ENCODE measurements at regions of chr3 and their contacts with region 1.

Region 1: GRCh38 chr3:105827959-105828358 is 40.9 kb downstream of the CBLB start:
- DNase-seq: no peak
- H3K4me3 Mint-ChIP-seq: peak overlapping the region; percentile 57
- H3K27ac Mint-ChIP-seq: peak overlapping the region; percentile 96
- H3K4me1 Mint-ChIP-seq: peaks cover 88% of the 10 kb centered on the region
- H3K27me3 Mint-ChIP-seq: no peaks in the 10 kb centered on the region

Region 2: GRCh38 chr3:105700575-105700974 is 127.4 kb before region 1 on chr3:
- intact Hi-C with region 1: no loop called
- DNase-seq: no peak
- H3K4me3 Mint-ChIP-seq: no peak overlapping the region
- H3K27ac Mint-ChIP-seq: peak overlapping the region; percentile 61
- H3K4me1 Mint-ChIP-seq: peaks cover 38% of the 10 kb centered on the region
- H3K27me3 Mint-ChIP-seq: no peaks in the 10 kb centered on the region

Region 3: GRCh38 chr3:105759442-105760078 is 68.4 kb before region 1 on chr3:
- intact Hi-C with region 1: no loop called
- DNase-seq: no peak
- H3K4me3 Mint-ChIP-seq: no peak overlapping the region
- H3K27ac Mint-ChIP-seq: peak overlapping the region; percentile 72
- H3K4me1 Mint-ChIP-seq: peaks cover 76% of the 10 kb centered on the region
- H3K27me3 Mint-ChIP-seq: no peaks in the 10 kb centered on the region

Region 4: GRCh38 chr3:105774444-105775180 is 53.3 kb before region 1 on chr3:
- intact Hi-C with region 1: loop called (anchors 1 kb)
- DNase-seq: no peak
- H3K4me3 Mint-ChIP-seq: no peak overlapping the region
- H3K27ac Mint-ChIP-seq: peak overlapping the region; percentile 76
- H3K4me1 Mint-ChIP-seq: peaks cover 71% of the 10 kb centered on the region
- H3K27me3 Mint-ChIP-seq: no peaks in the 10 kb centered on the region

Region 5: DNA sequence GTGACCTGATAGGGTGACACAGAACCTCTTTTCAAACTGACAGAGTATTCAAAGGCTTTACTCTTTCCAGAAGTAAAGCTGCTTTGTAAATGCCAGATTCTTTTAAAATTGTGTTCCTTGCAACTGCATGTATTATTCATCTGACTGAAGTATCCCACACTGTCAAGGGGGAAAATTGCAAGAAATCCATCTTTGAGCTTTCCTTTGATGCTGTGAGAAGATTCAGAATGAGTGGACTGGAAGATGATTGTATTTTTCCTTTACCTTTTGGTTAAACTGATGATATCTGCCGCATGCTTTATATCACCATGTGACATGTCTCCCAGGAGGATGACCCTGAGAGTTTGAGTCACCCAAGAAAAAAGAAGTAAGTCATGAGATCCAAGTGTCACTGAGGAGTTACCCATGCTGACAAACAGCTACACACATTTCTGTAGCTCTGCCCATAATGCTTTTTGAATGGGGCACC is 291.7 kb after region 1 on chr3:
- intact Hi-C with region 1: loop called (anchors 5 kb)
- DNase-seq: no peak
- H3K4me3 Mint-ChIP-seq: peak overlapping the region; percentile 20
- H3K27ac Mint-ChIP-seq: peak overlapping the region; percentile 90
- H3K4me1 Mint-ChIP-seq: peaks cover 37% of the 10 kb centered on the region
- H3K27me3 Mint-ChIP-seq: no peaks in the 10 kb centered on the region

Region 6: GRCh38 chr3:106299300-106300098 is 471.5 kb after region 1 on chr3:
- intact Hi-C with region 1: loop called (anchors 1 kb)
- DNase-seq: no peak
- H3K4me3 Mint-ChIP-seq: peak overlapping the region; percentile 23
- H3K27ac Mint-ChIP-seq: peak overlapping the region; percentile 63
- H3K4me1 Mint-ChIP-seq: peaks cover 70% of the 10 kb centered on the region
- H3K27me3 Mint-ChIP-seq: no peaks in the 10 kb centered on the region

Measured in activated T-helper 1 cell treated with anti-CD3 and anti-CD28 coated beads, Interleukin-12 subunit alpha, Interleukin-12 subunit beta, Interleukin-2, Interleukin-4 antibody, amounts not matched to agents 30 ng/mL and 10 ng/mL and 1 ng/mL, durations not matched to agents 14 hours and 24 hours and 36 hours (primary cell).